Mammary epithelial cell (primary cell): ENCODE measurements at regions of chr21 and their contacts with region 1.

Region 1: DNA sequence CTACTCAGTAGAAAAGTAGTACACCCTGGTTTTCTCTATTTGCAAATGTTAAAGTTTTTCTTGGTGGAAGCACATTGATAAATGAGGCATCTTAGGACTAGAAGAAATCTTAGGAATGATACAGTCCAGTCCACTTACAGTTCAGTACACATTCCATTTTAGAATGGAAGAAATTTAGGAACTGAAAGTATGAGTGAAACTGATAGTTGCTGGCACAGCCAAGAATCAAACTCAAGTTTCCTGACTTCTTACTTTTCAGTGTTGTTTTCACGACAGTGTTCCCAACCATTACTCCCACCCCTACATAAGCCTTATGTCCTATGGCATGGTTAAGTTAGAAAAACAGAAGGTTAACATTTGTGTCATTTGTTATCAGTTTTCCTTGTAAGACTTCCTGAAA is 258.5 kb downstream of the BACH1 start:
- DNase-seq: no peak
- H3K4me3 ChIP-seq: no peak overlapping the region
- H3K27ac ChIP-seq: no peak overlapping the region
- H3K4me1 ChIP-seq: no peaks in the 10 kb centered on the region
- H3K27me3 ChIP-seq: no peaks in the 10 kb centered on the region
- CTCF ChIP-seq: no peak

Region 2: GRCh38 chr21:29613021-29613420 is 55.8 kb after region 1 on chr21:
- CTCF ChIA-PET with region 1: no interaction called
- dilution Hi-C with region 1: no loop called
- in situ Hi-C with region 1: loop called in 1 of 2 experiments (anchors 10 kb)
- intact Hi-C with region 1: no loop called
- DNase-seq: no peak
- H3K4me3 ChIP-seq: no peak overlapping the region
- H3K27ac ChIP-seq: no peak overlapping the region
- H3K4me1 ChIP-seq: no peaks in the 10 kb centered on the region
- H3K27me3 ChIP-seq: no peaks in the 10 kb centered on the region
- CTCF ChIP-seq: no peak